ENCODE measurements at regions of chr7 and their contacts with region 1.

Region 1: GRCh38 chr7:99143853-99144672 is at the start of gene SMURF1:
- DNase-seq: peak; percentile 43
- H3K4me3 ChIP-seq: peak within 1 kb of the TSS; percentile 100
- H3K27ac ChIP-seq: peak within 1 kb of the TSS; percentile 96 to 99
- H3K4me1 ChIP-seq: peaks cover 3% of the 10 kb centered on the region
- H3K27me3 ChIP-seq: no peaks in the 10 kb centered on the region
- CTCF ChIP-seq: no peak
- POLR2A ChIP-seq: no peak
- total RNA-seq, gene SMURF1: 15.4 to 25.1 TPM

Region 2: GRCh38 chr7:98981701-98982100 is 162.4 kb before region 1 on chr7:
- intact Hi-C with region 1: no loop called
- DNase-seq: no peak
- H3K4me3 ChIP-seq: no peak overlapping the region
- H3K27ac ChIP-seq: no peak overlapping the region
- H3K4me1 ChIP-seq: no peaks in the 10 kb centered on the region
- H3K27me3 ChIP-seq: no peaks in the 10 kb centered on the region
- CTCF ChIP-seq: no peak
- POLR2A ChIP-seq: no peak

Region 3: DNA sequence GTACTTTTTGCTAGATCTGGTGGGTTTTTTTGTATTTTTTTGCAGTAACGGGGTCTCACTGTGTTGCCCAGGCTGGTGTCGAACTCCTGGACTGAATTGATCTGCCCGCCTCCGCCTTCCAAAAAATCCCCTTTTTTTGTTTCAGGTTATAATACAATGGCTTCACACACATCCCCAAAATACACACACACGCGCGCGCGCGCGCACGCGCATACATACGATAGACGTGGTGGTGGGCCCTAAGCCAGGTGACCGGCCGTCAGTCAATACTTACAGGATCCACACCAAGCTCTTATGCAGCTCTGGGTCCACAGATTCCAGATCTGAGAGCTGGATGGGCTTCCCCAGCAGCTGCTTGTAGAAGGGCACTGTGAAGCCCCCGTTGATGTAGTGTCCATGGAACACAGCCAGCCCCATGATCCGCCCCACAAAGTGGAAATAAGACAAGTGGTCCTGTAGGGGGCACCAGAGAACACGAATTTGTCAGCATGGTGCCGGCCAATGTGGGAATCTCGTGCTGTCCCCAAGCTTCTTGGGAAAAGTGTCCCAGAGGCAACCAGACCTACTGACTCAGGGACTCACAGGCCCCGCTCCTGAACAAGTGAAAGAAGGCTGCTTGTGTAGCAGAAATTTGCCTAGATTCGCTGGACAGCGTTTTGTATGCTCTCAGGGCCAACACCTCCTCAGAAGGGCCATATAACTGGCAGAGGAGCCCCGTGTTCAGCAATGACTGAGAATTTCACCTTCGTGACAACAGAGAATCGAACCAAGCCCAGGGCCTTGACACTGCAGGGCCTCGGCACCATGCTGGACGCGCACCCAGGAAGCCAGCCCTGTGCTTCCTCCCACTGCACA is 103.7 kb before region 1 on chr7:
- intact Hi-C with region 1: loop called (anchors 2 kb)
- DNase-seq: peak; percentile 86
- H3K4me3 ChIP-seq: no peak overlapping the region
- H3K27ac ChIP-seq: no peak overlapping the region
- H3K4me1 ChIP-seq: peaks cover 6% of the 10 kb centered on the region
- H3K27me3 ChIP-seq: no peaks in the 10 kb centered on the region
- CTCF ChIP-seq: peak; percentile 60 to 87 (median 84)
- POLR2A ChIP-seq: no peak

Region 4: GRCh38 chr7:99173787-99174186 is 29.7 kb after region 1 on chr7:
- intact Hi-C with region 1: no loop called
- DNase-seq: no peak
- H3K4me3 ChIP-seq: no peak overlapping the region
- H3K27ac ChIP-seq: no peak overlapping the region
- H3K4me1 ChIP-seq: no peaks in the 10 kb centered on the region
- H3K27me3 ChIP-seq: no peaks in the 10 kb centered on the region
- CTCF ChIP-seq: no peak
- POLR2A ChIP-seq: no peak

Region 5: DNA sequence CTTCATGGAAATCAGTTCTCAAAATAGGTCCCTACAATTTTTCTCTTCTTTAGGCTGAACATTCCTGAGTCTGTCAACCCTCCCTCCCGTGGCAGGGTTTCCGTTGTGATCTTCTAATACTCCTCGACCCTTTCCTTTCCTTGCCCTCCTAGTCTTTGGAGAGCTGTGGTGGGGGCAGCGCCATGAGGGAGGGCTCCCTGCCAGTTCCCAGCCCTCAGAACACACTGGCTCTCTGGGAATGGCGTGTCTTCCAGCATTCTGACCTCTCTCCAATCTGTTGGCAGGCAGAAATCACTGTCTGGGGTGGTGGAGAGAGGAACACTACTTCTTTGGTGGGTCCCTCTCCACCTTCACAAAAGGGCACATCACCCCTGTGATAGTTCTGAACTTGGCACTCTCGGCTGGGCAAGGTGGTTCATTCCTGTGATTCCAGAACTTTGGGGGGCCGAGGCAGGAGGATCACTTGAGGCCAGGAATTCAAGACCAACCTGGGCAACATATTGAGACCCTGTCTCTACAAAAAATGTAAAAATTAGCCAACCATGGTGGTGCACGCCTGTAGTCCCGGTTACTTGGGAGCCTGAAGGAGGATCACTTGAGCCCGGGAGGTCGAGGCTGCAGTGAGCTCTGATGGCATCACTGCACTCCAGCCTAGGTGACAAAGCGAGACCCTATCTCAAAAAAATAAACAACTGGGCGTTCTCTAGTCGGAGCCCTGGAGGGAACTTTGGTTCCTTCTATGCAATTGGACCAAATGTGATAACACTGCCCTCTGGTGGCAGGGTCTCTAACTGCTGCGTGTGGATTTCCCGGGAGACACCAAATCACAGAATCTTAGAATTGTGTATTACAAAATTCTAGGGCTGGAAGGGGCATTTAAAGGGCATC is 168.5 kb after region 1 on chr7:
- intact Hi-C with region 1: loop called (anchors 5 kb)
- DNase-seq: peak; percentile 66
- H3K4me3 ChIP-seq: no peak overlapping the region
- H3K27ac ChIP-seq: no peak overlapping the region
- H3K4me1 ChIP-seq: no peaks in the 10 kb centered on the region
- H3K27me3 ChIP-seq: no peaks in the 10 kb centered on the region
- CTCF ChIP-seq: peak; percentile 75 to 96 (median 88)
- POLR2A ChIP-seq: no peak

Region 6: GRCh38 chr7:99408379-99409191 is 264.5 kb after region 1 on chr7 and contains the starts of genes BUD31 and PDAP1:
- intact Hi-C with region 1: loop called (anchors 10 kb)
- DNase-seq: peak; percentile 93
- H3K4me3 ChIP-seq: peak within 1 kb of the TSS; percentile 85 to 87
- H3K27ac ChIP-seq: peak within 1 kb of the TSS; percentile 93 to 98
- H3K4me1 ChIP-seq: peaks cover 11% of the 10 kb centered on the region
- H3K27me3 ChIP-seq: no peaks in the 10 kb centered on the region
- CTCF ChIP-seq: peak in 2 of 4 experiments; percentile 60 to 61
- POLR2A ChIP-seq: peak; percentile 81
- total RNA-seq, gene BUD31: 73.8 to 78.3 TPM
- total RNA-seq, gene PDAP1: 98.6 to 103 TPM